Left ventricle myocardium inferior (tissue), 1 donor: ENCODE measurements at regions of chr1 and their contacts with region 1.

Region 1: DNA sequence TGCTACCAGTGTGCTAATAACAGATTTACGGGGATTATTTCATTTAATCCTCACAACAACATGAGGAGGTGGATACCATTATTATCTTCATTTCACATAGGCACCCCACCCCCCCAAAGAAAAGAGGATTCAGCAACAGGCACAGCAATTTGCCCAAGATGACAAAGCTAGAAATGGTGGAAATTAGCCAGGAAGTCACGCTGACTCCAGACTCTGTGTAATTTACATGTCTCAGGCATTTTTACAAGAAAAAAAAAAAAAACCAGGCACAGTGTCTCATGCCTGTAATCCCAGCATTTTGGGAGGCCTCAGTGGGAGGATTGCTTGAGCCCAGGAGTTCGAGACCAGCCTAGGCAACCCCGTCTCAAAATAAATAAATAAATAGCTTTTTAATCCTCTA is 37.5 kb upstream of the PRDM2 start:
- DNase-seq: no peak
- H3K4me3 ChIP-seq: no peak overlapping the region
- H3K27ac ChIP-seq: no peak overlapping the region
- H3K4me1 ChIP-seq: no peaks in the 10 kb centered on the region
- H3K27me3 ChIP-seq: peaks cover 18% of the 10 kb centered on the region
- CTCF ChIP-seq: no peak

Region 2: DNA sequence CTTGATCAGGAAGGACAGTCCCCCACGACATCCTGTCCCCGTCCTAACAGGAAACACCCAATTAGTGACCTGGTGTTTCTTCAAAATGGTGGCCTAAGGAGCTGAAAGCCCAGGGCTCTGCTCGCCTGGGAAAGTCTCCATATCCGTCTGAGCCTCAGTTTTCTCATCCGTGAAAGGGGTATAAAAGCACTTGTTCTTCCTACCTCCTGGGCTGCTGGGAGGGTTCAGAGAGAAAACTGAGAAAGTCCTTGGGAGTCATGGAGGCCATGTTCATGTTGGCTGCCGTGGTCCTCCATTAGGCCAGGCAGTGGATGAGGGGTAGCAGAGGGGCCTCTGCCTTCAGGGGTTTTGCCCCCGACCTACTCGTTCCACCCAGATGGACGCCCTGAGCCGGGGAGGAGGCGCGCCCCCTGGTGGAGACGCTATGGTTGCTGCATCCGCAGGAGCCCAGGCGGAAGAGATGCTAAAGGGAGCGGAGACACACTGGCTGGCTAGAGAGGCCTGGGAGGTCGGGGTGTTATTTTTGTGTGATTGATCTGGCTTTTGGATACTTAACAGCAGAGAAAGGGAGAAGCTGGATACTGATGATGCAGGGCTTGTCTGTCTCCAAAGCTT is 151.0 kb after region 1 on chr1:
- intact Hi-C with region 1: loop called (anchors 10 kb)
- DNase-seq: no peak
- H3K4me3 ChIP-seq: no peak overlapping the region
- H3K27ac ChIP-seq: no peak overlapping the region
- H3K4me1 ChIP-seq: peaks cover 20% of the 10 kb centered on the region
- H3K27me3 ChIP-seq: no peaks in the 10 kb centered on the region
- CTCF ChIP-seq: peak; percentile 60